ENCODE measurements at regions of chr1 and their contacts with region 1.

Region 1: GRCh38 chr1:224922404-224923164 is 6.9 kb upstream of the DNAH14 start:
- DNase-seq: no peak
- H3K4me3 ChIP-seq: no peak overlapping the region
- H3K27ac ChIP-seq: no peak overlapping the region
- H3K4me1 ChIP-seq: no peaks in the 10 kb centered on the region
- H3K27me3 ChIP-seq: no peaks in the 10 kb centered on the region
- CTCF ChIP-seq: peak; percentile 65 to 79 (median 77)
- EP300 ChIP-seq: no peak
- POLR2A ChIP-seq: no peak

Region 2: DNA sequence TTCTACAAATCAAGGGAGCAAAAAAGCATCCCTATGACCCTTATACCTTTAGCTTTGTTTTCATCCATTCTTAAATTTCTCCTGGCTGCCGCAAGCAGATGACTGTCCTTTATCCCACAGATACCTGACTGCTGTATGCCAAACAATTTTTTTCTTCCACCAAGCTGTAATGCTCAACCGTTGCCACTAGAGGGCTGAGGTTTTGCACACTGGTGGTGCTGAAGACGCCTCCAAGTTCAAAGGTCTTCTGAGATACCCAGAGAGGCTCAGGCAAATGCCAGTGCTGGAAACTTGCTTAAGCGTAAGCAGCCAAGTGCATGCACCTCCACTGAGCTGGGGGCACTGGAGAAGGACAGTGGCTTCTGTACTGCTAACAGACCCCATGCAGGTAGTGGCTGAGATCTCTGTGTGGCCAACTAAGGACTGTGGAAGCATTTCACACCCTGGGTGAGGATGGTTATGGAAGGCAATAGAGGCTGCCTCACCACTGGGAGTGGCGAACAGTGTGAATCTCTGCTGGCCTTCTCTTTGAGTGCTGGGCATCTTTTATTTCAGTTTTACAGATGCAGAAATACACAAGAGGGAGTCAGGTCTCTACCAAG is 277.9 kb before region 1 on chr1:
- in situ Hi-C with region 1: no loop called
- intact Hi-C with region 1: loop called (anchors 5 kb)
- DNase-seq: peak; percentile 52
- H3K4me3 ChIP-seq: no peak overlapping the region
- H3K27ac ChIP-seq: no peak overlapping the region
- H3K4me1 ChIP-seq: no peaks in the 10 kb centered on the region
- H3K27me3 ChIP-seq: no peaks in the 10 kb centered on the region
- CTCF ChIP-seq: peak; percentile 80 to 90 (median 89)
- EP300 ChIP-seq: no peak
- POLR2A ChIP-seq: no peak

Region 3: GRCh38 chr1:224800486-224801119 is 122.0 kb before region 1 on chr1:
- in situ Hi-C with region 1: no loop called
- intact Hi-C with region 1: no loop called
- DNase-seq: no peak
- H3K4me3 ChIP-seq: no peak overlapping the region
- H3K27ac ChIP-seq: no peak overlapping the region
- H3K4me1 ChIP-seq: no peaks in the 10 kb centered on the region
- H3K27me3 ChIP-seq: no peaks in the 10 kb centered on the region
- CTCF ChIP-seq: no peak
- EP300 ChIP-seq: no peak
- POLR2A ChIP-seq: no peak

Measured in transverse colon (tissue), 4 donors.